ENCODE measurements at regions of chr17 and their contacts with region 1.

Region 1: DNA sequence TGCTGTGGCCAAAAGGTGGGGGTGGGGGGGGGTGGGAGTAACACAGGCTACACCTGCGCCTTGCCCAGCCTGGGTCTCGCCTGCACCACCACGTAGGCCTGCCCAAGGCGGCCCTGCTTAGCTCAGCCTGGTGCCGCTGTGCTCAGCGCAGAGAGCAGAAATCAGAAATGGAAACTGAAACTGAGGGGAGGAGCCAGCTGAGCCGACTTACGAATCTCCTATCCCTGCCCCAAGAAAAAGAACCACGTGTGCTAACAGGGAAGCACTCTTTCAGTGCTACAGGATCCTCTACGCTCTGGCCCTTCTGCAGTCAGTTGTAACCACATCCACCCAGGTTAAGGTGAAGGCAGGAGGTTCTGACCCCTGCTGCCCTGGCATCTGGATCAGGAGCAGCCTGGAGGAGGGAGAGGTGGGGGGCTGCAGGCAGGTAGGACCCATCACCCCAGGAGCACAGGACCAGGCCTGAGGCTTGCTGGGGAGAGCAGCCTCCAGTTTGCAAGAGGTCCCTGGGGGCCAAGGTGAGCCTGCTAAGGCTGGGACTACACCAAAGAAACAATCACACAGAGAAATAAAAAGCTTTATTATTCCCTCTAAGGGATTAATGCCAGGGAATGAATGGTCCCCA is at the start of gene DHX58:
- DNase-seq: peak; percentile 92
- ATAC-seq: peak; percentile 89
- H3K4me3 Mint-ChIP-seq: peak within 1 kb of the TSS; percentile 90
- H3K27ac Mint-ChIP-seq: peak within 1 kb of the TSS; percentile 98
- H3K4me1 Mint-ChIP-seq: peaks cover 68% of the 10 kb centered on the region
- H3K27me3 Mint-ChIP-seq: no peaks in the 10 kb centered on the region
- total RNA-seq, gene DHX58: 71.9 to 72.9 TPM

Region 2: DNA sequence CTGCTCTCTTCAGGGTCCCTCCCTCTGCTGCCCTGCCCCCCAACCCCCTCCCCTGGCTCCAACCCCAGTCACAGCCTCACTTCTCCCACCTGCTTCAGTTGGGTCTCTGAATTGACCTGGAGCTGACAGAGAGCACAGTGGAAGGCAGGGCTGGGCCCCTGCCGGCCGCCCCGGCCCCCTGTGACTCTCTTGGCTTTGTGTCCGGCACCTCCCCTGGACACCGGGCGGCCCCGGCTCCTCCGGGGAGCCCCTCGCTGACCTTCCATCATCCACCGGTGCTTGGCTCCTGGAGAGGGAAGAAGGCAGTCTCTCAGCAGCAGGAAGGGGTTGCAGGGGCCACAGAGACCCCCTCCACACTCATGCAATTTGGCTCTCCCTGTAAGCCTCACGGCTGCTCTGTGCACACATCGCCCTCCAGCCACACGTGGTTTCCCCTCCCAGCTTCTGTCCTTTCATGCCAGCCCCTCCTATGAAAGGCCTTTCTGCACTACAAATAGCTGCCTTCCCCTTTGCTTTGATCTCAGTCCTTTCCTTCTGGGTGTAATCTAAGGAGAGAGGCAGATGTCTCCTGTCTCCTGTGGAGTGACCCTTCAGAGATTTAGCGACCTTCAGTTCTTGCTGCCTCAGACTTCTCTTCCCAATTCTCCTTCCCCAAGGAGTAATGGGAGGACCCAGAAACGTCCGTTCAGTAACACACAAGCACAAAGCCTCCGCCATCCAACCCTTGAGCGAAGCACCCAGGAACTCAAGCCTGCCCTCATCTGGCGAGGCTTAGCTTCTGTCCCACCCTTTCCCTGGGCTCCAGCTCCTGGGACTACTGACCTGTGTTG is 84.5 kb before region 1 on chr17:
- CTCF ChIA-PET with region 1: interaction called, 168 read pairs
- POLR2A ChIA-PET with region 1: interaction called, 40 read pairs
- DNase-seq: no peak
- ATAC-seq: no peak
- H3K4me3 Mint-ChIP-seq: no peak overlapping the region
- H3K27ac Mint-ChIP-seq: no peak overlapping the region
- H3K4me1 Mint-ChIP-seq: peaks cover 17% of the 10 kb centered on the region
- H3K27me3 Mint-ChIP-seq: no peaks in the 10 kb centered on the region

Region 3: DNA sequence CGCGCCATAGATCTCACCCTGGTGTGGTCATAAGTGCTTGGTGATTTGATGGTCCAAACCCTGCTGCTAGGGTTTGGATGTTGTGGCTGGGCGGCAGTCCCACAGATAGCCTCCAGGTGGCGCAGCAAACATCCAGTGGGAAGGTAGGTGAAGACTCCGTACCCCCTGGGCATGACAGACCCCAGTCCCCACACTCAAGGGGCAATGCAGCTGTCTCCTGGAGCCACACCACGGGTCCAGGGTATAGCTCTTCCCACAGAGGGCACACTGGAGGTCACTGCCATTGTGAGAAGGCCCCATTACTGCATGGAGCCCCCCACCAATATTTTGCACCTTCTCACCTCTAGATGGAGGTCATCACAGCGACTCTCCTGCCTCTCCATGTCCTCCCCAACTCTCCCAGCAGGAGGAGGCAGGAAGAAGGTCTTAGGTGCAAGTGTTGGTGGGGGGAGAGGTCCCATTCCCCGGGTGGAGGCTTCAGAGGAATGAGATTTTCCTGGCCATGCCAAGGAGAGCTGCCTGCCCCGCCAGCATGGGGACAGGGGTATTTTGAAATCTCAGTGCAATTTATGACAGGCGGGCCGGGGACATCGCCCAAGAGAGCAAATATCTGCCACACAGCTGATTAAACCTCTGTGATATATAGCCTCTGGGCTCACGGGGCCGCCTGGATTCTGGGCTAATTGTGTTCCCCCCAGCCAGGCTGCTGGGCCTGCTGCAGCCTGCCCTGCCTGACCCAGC is 45.1 kb before region 1 on chr17:
- CTCF ChIA-PET with region 1: interaction called, 77 read pairs
- POLR2A ChIA-PET with region 1: interaction called, 22 read pairs
- DNase-seq: peak; percentile 79
- ATAC-seq: no peak
- H3K4me3 Mint-ChIP-seq: no peak overlapping the region
- H3K27ac Mint-ChIP-seq: no peak overlapping the region
- H3K4me1 Mint-ChIP-seq: peaks cover 42% of the 10 kb centered on the region
- H3K27me3 Mint-ChIP-seq: no peaks in the 10 kb centered on the region

Region 4: GRCh38 chr17:42072323-42073187 is 40.1 kb before region 1 on chr17:
- CTCF ChIA-PET with region 1: interaction called, 77 read pairs
- POLR2A ChIA-PET with region 1: interaction called, 22 read pairs
- DNase-seq: no peak
- ATAC-seq: peak; percentile 47
- H3K4me3 Mint-ChIP-seq: peak overlapping the region; percentile 70
- H3K27ac Mint-ChIP-seq: peak overlapping the region; percentile 57
- H3K4me1 Mint-ChIP-seq: peaks cover 25% of the 10 kb centered on the region
- H3K27me3 Mint-ChIP-seq: no peaks in the 10 kb centered on the region

Region 5: GRCh38 chr17:42101513-42102319 is 10.9 kb before region 1 on chr17:
- CTCF ChIA-PET with region 1: interaction called, 10 read pairs
- POLR2A ChIA-PET with region 1: interaction called, 14 read pairs
- DNase-seq: peak; percentile 75
- ATAC-seq: peak; percentile 66
- H3K4me3 Mint-ChIP-seq: no peak overlapping the region
- H3K27ac Mint-ChIP-seq: no peak overlapping the region
- H3K4me1 Mint-ChIP-seq: peaks cover 13% of the 10 kb centered on the region
- H3K27me3 Mint-ChIP-seq: peaks cover 14% of the 10 kb centered on the region

Measured in activated CD8-positive, alpha-beta T cell treated with anti-CD3 and anti-CD28 coated beads, Interleukin-2, amount 10 ng/mL, durations not matched to agents 7 days and 5 days (primary cell).